Activated CD4-positive, alpha-beta memory T cell treated with anti-CD3 and anti-CD28 coated beads for 36 hours (primary cell): ENCODE measurements at regions of chr17 and their contacts with region 1.

Region 1: GRCh38 chr17:8118769-8119580 is 661 bp upstream of the ALOXE3 start:
- DNase-seq: peak; percentile 90
- H3K4me3 Mint-ChIP-seq: peak overlapping the region; percentile 83
- H3K27ac Mint-ChIP-seq: peak overlapping the region; percentile 91
- H3K4me1 Mint-ChIP-seq: peaks cover 48% of the 10 kb centered on the region
- H3K27me3 Mint-ChIP-seq: peaks cover 56% of the 10 kb centered on the region

Region 2: GRCh38 chr17:7614422-7615264 is 504.3 kb before region 1 on chr17 and contains the start of gene FXR2:
- CTCF ChIA-PET with region 1: no interaction called
- POLR2A ChIA-PET with region 1: no interaction called
- intact Hi-C with region 1: loop called (anchors 1 kb)
- DNase-seq: peak; percentile 100
- H3K4me3 Mint-ChIP-seq: peak within 1 kb of the TSS; percentile 87
- H3K27ac Mint-ChIP-seq: peak within 1 kb of the TSS; percentile 87
- H3K4me1 Mint-ChIP-seq: peaks cover 31% of the 10 kb centered on the region
- H3K27me3 Mint-ChIP-seq: no peaks in the 10 kb centered on the region
- total RNA-seq, gene FXR2: 37.5 to 40.1 TPM

Region 3: GRCh38 chr17:7931709-7932482 is 187.1 kb before region 1 on chr17 and contains the starts of genes CNTROB and TRAPPC1:
- CTCF ChIA-PET with region 1: interaction called, 5 read pairs
- POLR2A ChIA-PET with region 1: no interaction called
- intact Hi-C with region 1: loop called (anchors 5 kb)
- DNase-seq: peak; percentile 100
- H3K4me3 Mint-ChIP-seq: peak within 1 kb of the TSS; percentile 93
- H3K27ac Mint-ChIP-seq: peak within 1 kb of the TSS; percentile 88
- H3K4me1 Mint-ChIP-seq: peaks cover 47% of the 10 kb centered on the region
- H3K27me3 Mint-ChIP-seq: no peaks in the 10 kb centered on the region
- total RNA-seq, gene CNTROB: 45.9 to 50.1 TPM
- total RNA-seq, gene TRAPPC1: 197 to 201 TPM

Region 4: DNA sequence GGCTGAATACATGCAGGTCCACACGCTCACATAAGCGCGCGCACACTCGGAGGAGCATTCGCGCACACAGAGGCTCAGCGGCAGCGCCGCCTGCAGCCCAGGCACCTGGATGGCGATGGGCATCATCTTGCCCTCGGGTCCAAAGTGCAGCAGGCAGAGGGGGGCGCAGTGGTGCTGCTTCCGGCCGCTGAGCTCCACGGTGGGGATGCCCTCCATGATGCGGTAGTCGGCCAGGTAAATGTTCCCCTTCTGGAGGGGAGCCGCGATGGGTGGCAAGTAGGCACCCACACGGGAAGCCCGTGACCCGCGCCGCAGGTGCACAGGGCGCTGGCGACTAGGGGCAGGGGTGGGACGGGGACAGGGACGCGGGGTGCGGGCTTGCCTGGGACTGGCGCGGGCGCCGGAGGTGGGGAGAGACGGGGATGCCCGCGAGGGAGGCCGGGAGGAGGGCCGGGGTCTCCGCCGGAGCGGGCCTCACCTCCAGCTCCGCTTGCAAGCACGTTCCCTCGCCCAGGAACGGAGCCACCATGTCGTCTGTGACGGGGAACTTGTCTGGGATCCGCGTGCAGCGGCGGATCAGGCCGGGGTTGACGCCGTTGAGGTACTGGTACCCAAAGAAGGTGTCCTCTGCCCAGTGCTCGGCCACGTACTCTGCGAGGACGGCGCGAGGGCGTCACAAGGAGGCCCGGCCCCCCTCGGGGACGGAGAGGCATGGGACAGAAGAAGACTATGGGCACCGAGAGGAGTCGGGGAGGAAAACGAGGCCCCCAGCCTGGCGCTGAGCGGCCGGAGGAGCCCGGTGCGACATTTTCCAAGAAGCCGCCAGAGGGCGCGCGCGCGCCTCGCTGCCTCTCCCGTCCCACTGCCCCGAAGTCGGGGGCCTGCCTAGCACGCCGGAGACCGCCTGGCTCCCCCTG is 39.4 kb before region 1 on chr17:
- CTCF ChIA-PET with region 1: interaction called, 42 read pairs
- POLR2A ChIA-PET with region 1: interaction called, 3 read pairs
- intact Hi-C with region 1: loop called (anchors 1 kb)
- DNase-seq: peak; percentile 89
- H3K4me3 Mint-ChIP-seq: peak overlapping the region; percentile 93
- H3K27ac Mint-ChIP-seq: peak overlapping the region; percentile 81
- H3K4me1 Mint-ChIP-seq: peaks cover 13% of the 10 kb centered on the region
- H3K27me3 Mint-ChIP-seq: peaks cover 10% of the 10 kb centered on the region

Region 5: GRCh38 chr17:8151123-8151640 is 32.2 kb after region 1 on chr17:
- CTCF ChIA-PET with region 1: interaction called, 62 read pairs
- POLR2A ChIA-PET with region 1: interaction called, 6 read pairs
- intact Hi-C with region 1: loop called (anchors 1 kb)
- DNase-seq: peak; percentile 92
- H3K4me3 Mint-ChIP-seq: peak overlapping the region; percentile 83
- H3K27ac Mint-ChIP-seq: no peak overlapping the region
- H3K4me1 Mint-ChIP-seq: peaks cover 35% of the 10 kb centered on the region
- H3K27me3 Mint-ChIP-seq: no peaks in the 10 kb centered on the region

Region 6: GRCh38 chr17:8189711-8190477 is 70.9 kb after region 1 on chr17 and contains the start of gene BORCS6:
- CTCF ChIA-PET with region 1: interaction called, 36 read pairs
- POLR2A ChIA-PET with region 1: interaction called, 6 read pairs
- intact Hi-C with region 1: loop called (anchors 1 kb)
- DNase-seq: peak; percentile 98
- H3K4me3 Mint-ChIP-seq: no peak within 1 kb of the TSS
- H3K27ac Mint-ChIP-seq: peak within 1 kb of the TSS; percentile 93
- H3K4me1 Mint-ChIP-seq: peaks cover 10% of the 10 kb centered on the region
- H3K27me3 Mint-ChIP-seq: no peaks in the 10 kb centered on the region
- total RNA-seq, gene BORCS6: 7.9 to 8.3 TPM

Region 7: DNA sequence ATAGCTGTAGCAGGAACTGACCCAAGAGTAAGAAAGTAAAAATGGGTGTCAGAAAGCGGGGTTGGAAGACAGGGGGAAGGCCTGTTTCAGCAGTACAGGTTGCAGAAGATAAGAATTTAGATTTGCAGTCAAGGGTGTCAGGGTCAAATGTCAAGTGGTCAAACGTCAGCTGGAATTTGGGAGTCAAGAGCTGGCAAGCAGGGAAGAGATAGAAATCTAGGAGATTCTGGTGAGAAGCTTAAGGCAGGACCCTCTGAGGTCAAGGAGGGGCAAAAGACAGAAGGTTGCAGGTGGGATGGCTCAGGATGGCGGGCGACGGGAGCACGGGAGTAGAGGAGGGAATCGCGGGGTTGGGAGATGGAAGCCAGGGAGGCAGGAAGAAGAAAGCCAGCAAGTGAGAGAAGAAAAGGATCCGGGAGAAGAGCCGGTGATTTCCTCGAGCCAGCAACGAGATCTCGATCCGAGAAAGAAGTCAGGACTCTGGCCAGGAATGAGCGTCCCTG is 175.9 kb after region 1 on chr17:
- CTCF ChIA-PET with region 1: interaction called, 13 read pairs
- POLR2A ChIA-PET with region 1: interaction called, 5 read pairs
- intact Hi-C with region 1: loop called (anchors 1 kb)
- DNase-seq: no peak
- H3K4me3 Mint-ChIP-seq: peak overlapping the region; percentile 80
- H3K27ac Mint-ChIP-seq: peak overlapping the region; percentile 77
- H3K4me1 Mint-ChIP-seq: peaks cover 33% of the 10 kb centered on the region
- H3K27me3 Mint-ChIP-seq: no peaks in the 10 kb centered on the region

Region 8: GRCh38 chr17:8314797-8315763 is 196.1 kb after region 1 on chr17:
- CTCF ChIA-PET with region 1: no interaction called
- POLR2A ChIA-PET with region 1: no interaction called
- intact Hi-C with region 1: no loop called
- DNase-seq: no peak
- H3K4me3 Mint-ChIP-seq: no peak overlapping the region
- H3K27ac Mint-ChIP-seq: no peak overlapping the region
- H3K4me1 Mint-ChIP-seq: no peaks in the 10 kb centered on the region
- H3K27me3 Mint-ChIP-seq: peaks cover 18% of the 10 kb centered on the region

Region 9: GRCh38 chr17:8651013-8651412 is 532.0 kb after region 1 on chr17:
- CTCF ChIA-PET with region 1: no interaction called
- POLR2A ChIA-PET with region 1: no interaction called
- intact Hi-C with region 1: no loop called
- DNase-seq: no peak
- H3K4me3 Mint-ChIP-seq: no peak overlapping the region
- H3K27ac Mint-ChIP-seq: no peak overlapping the region
- H3K4me1 Mint-ChIP-seq: no peaks in the 10 kb centered on the region
- H3K27me3 Mint-ChIP-seq: peaks cover 25% of the 10 kb centered on the region

Region 10: DNA sequence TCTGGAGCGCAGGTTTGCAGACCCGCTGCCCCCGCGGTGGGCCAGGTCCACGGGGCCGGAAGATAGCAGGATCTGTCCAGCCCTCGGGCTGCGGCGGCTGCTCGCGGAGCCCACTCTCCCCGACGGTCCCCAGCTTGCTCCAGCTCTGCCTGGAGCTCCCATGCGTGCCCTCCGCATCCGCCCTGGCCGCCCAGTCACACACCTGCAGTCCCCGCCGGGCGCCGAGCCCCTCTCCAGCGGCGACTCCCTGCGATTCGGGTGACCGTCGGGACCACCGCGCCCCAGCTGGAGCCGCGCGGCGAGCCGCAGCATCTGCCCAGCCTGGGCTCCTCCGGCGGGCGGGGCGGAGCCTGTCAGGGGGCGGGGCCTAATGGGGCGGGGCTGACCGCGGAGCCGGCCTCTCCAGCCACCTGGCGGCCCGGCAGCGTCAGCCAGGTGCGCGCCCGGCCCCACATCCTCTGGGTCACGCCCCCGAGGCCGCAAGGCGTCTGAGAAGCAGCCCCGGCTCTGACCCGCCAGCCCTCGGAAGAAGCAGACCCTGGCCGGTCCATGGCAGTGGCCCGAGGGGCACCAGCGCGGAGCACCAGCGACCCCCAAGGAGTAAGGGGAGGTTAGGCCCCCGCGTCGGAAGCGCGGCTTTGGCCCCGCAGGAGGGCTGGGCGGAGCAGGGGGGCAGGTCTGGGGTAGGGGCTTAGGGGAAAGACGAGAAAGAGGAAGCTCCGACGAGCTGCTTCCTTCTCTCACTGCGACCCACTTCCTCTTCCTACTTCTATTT is 846.6 kb after region 1 on chr17 and contains the start of gene PIK3R5:
- CTCF ChIA-PET with region 1: no interaction called
- POLR2A ChIA-PET with region 1: no interaction called
- intact Hi-C with region 1: no loop called
- DNase-seq: peak; percentile 90
- H3K4me3 Mint-ChIP-seq: peak within 1 kb of the TSS; percentile 88
- H3K27ac Mint-ChIP-seq: peak within 1 kb of the TSS; percentile 80
- H3K4me1 Mint-ChIP-seq: peaks cover 48% of the 10 kb centered on the region
- H3K27me3 Mint-ChIP-seq: no peaks in the 10 kb centered on the region
- total RNA-seq, gene PIK3R5: 20.7 to 22.4 TPM